ENCODE measurements at regions of chr11 and their contacts with region 1.

Region 1: GRCh38 chr11:58675334-58676155 is 53.1 kb downstream of the CNTF start:
- DNase-seq: peak; percentile 36 to 87
- H3K4me3 ChIP-seq: no peak overlapping the region
- H3K27ac ChIP-seq: no peak overlapping the region
- H3K4me1 ChIP-seq: no peaks in the 10 kb centered on the region
- H3K27me3 ChIP-seq: no peaks in the 10 kb centered on the region
- CTCF ChIP-seq: peak; percentile 83 to 98 (median 95)
- EP300 ChIP-seq: no peak
- POLR2A ChIP-seq: no peak
- RAD21 ChIP-seq: peak; percentile 72 to 73

Region 2: DNA sequence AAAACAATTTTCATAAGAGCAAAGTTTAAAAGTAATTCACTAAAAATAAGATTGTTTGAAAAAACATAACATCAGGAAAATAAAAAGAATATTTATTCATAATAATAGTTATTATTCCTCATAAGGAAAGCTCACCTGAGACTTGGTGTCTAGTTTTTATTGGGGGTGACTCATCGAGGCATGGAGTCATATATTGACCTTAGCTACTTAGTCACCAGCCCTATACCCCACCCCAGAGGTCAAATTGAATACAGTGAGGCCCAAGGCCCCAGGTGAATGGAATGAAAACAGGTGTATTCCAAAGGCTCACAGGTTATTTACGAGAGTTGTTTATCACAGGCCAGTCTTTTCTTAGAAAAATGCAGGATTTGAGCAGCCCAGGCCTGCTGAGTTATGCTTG is 16.1 kb before region 1 on chr11:
- CTCF ChIA-PET with region 1: interaction called, 17 read pairs
- POLR2A ChIA-PET with region 1: no interaction called
- DNase-seq: no peak
- H3K4me3 ChIP-seq: no peak overlapping the region
- H3K27ac ChIP-seq: no peak overlapping the region
- H3K4me1 ChIP-seq: no peaks in the 10 kb centered on the region; a peak in 1 of 7 replicates
- H3K27me3 ChIP-seq: no peaks in the 10 kb centered on the region
- CTCF ChIP-seq: no peak
- EP300 ChIP-seq: no peak
- POLR2A ChIP-seq: no peak
- RAD21 ChIP-seq: no peak

Region 3: GRCh38 chr11:58685973-58686722 is 10.6 kb after region 1 on chr11:
- CTCF ChIA-PET with region 1: interaction called, 10 read pairs
- POLR2A ChIA-PET with region 1: no interaction called
- DNase-seq: no peak
- H3K4me3 ChIP-seq: no peak overlapping the region
- H3K27ac ChIP-seq: no peak overlapping the region
- H3K4me1 ChIP-seq: no peaks in the 10 kb centered on the region
- H3K27me3 ChIP-seq: no peaks in the 10 kb centered on the region
- CTCF ChIP-seq: no peak
- EP300 ChIP-seq: no peak
- POLR2A ChIP-seq: no peak
- RAD21 ChIP-seq: no peak

Region 4: DNA sequence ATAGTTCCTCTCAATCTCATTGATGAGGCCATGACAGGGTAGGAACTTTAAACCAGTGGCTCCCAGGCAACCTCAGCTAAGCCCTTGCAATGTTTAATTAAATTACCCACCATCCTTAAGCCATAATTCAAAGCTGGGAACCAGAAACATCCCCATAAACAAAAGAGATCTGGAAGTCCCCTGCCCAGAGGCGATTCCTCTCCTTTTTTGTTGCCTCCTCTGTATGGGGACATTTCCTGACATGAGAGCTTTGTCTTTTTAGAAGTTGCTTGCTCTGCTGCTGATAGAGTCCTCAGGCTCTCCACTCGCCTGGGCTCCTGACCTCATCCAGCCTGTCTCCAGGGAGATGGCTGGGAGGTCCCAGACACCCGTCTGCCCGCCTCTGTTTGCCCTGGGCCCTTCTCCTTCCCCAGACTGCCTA is 499.6 kb after region 1 on chr11:
- CTCF ChIA-PET with region 1: no interaction called
- POLR2A ChIA-PET with region 1: no interaction called
- DNase-seq: no peak
- H3K4me3 ChIP-seq: no peak overlapping the region
- H3K27ac ChIP-seq: no peak overlapping the region
- H3K4me1 ChIP-seq: peaks cover 6 to 19% (median 10%) of the 10 kb centered on the region in 4 experiments; a peak in 6 of 7 replicates
- H3K27me3 ChIP-seq: no peaks in the 10 kb centered on the region
- CTCF ChIP-seq: no peak
- EP300 ChIP-seq: no peak
- POLR2A ChIP-seq: no peak
- RAD21 ChIP-seq: no peak